ENCODE measurements at regions of chr1 and their contacts with region 1.

Region 1: DNA sequence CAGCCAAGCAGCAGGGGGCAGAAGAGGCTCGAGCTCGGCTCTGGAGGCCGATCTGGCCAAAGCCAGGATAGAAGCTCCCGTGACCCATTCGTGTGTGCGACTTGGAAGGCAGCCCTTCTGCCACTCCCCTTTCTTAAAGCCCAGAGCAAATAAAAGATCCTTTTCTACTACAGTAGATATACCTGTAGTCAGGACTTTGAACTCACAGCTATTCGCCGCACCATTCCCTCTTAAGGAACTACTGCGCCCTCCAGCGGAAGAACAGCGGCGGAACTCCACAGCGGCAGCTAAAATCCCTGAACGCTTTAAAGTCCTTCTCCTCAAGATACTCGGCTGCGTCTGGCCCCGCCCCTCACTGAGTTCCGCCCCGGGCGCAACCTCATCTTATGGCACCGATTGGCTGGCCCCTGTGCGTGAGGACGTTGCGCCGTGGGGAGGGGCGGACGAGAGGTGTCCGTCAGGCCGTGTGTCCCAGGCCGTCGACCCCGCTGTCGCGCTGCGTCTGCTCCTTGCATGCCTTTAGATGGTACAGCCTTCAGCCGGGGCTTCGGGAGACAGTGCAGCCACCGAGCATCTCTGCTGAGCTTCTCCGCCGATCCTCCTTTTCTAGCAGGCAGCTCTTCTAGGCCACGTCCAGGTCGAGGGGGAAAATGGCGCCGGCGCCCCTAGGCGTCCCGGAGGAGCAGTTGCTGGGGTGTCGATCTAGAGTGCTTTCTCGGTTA is at the start of gene LRIG2:
- DNase-seq: peak; percentile 98
- H3K4me3 ChIP-seq: peak within 1 kb of the TSS; percentile 59 to 96 (median 69)
- H3K27ac ChIP-seq: peak within 1 kb of the TSS; percentile 71
- H3K4me1 ChIP-seq: peaks cover 11% of the 10 kb centered on the region
- H3K27me3 ChIP-seq: no peaks in the 10 kb centered on the region
- CTCF ChIP-seq: peak; percentile 73 to 86
- POLR2A ChIP-seq: peak; percentile 96
- total RNA-seq, gene LRIG2: 14.4 and 20.1 TPM in 2 replicates

Region 2: DNA sequence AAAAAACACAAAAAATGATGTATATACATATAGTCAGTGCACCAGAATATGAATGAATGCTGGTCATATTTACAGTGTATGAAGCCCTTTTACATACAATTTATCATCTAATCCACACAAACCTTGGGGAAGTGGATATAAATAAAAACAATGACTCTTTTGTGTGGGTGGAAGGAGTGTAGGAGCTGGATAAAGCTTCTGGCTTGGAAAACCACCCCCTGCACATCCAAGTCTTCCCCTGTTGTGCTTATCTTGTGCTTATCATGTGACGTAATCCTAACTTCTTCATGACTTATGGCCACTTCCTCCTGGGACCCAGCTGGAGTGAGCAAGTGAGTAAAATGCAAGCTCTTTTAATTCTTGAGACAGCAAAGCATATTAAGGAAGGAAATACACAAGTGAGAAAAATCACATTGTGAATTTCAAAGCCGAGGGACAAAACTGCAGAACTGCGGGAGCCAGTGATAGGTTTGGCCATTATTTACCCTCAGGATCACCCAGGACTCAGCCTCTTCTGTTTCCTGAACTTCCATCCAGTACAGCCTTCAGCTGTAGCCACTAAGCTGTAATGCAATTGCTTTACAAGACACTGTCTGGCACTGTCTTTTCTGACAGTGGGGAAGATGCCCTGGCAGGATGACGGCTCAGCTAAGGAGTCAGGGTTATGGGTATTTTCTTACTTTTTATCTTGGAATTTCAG is 253.8 kb before region 1 on chr1:
- CTCF ChIA-PET with region 1: interaction called, 13 read pairs
- POLR2A ChIA-PET with region 1: no interaction called
- dilution Hi-C with region 1: no loop called
- intact Hi-C with region 1: no loop called
- DNase-seq: peak; percentile 95
- H3K4me3 ChIP-seq: peak overlapping the region in 1 of 3 experiments; percentile 43
- H3K27ac ChIP-seq: peak overlapping the region; percentile 93
- H3K4me1 ChIP-seq: peaks cover 31% of the 10 kb centered on the region
- H3K27me3 ChIP-seq: no peaks in the 10 kb centered on the region
- CTCF ChIP-seq: no peak
- POLR2A ChIP-seq: peak; percentile 18

Region 3: DNA sequence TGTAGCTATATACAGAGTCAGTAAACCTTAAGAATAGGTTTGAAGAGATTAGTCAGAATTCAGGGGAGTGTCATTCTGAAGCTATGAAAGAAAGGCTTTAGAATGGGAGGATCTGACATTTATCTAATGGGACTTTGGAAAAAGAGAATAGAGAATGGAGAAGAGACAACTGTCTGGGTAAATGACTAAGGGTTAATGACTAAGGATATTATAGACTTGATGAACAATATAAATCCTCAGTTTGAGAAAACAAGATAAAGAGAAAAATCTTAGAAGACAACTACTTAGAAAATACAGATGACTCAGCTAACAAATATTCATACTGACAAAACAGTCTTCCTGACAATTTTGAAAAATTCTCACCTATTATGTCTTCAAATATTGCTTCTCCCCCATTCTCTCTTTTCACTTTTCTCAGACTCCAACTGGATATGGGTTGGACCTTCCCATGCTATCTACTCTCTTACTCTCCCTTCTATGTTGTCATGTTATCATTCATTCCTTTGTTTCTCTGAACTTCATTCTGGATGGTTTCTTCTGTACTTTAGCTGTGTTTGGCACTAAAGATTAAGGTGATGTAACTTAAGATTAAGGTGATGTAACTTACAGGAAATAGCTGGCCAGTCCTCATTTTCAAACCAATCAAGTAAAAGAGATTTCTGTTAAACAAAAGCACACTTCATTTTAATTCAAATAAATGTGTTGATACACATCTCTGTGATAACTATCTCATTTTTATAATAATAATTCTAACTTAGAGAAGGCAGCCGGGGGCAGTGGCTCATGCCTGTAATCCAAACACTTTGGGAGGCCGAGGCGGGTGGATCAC is 137.2 kb before region 1 on chr1:
- CTCF ChIA-PET with region 1: interaction called, 12 read pairs
- POLR2A ChIA-PET with region 1: no interaction called
- dilution Hi-C with region 1: no loop called
- intact Hi-C with region 1: loop called (anchors 5 kb)
- DNase-seq: peak; percentile 57
- H3K4me3 ChIP-seq: no peak overlapping the region
- H3K27ac ChIP-seq: peak overlapping the region; percentile 74
- H3K4me1 ChIP-seq: peaks cover 32% of the 10 kb centered on the region
- H3K27me3 ChIP-seq: no peaks in the 10 kb centered on the region
- CTCF ChIP-seq: no peak
- POLR2A ChIP-seq: no peak

Region 4: GRCh38 chr1:112998592-112999235 is 74.2 kb before region 1 on chr1:
- CTCF ChIA-PET with region 1: interaction called, 14 read pairs
- POLR2A ChIA-PET with region 1: no interaction called
- dilution Hi-C with region 1: no loop called
- intact Hi-C with region 1: no loop called
- DNase-seq: peak; percentile 82
- H3K4me3 ChIP-seq: no peak overlapping the region
- H3K27ac ChIP-seq: no peak overlapping the region
- H3K4me1 ChIP-seq: peaks cover 3% of the 10 kb centered on the region
- H3K27me3 ChIP-seq: no peaks in the 10 kb centered on the region
- CTCF ChIP-seq: no peak
- POLR2A ChIP-seq: no peak

Region 5: GRCh38 chr1:113095790-113096455 is 23.0 kb after region 1 on chr1:
- CTCF ChIA-PET with region 1: interaction called, 10 read pairs
- POLR2A ChIA-PET with region 1: no interaction called
- dilution Hi-C with region 1: no loop called
- intact Hi-C with region 1: no loop called
- DNase-seq: no peak
- H3K4me3 ChIP-seq: no peak overlapping the region
- H3K27ac ChIP-seq: no peak overlapping the region
- H3K4me1 ChIP-seq: no peaks in the 10 kb centered on the region
- H3K27me3 ChIP-seq: no peaks in the 10 kb centered on the region
- CTCF ChIP-seq: no peak
- POLR2A ChIP-seq: no peak